WTC11 (cell line): ENCODE measurements at regions of chr22 and their contacts with region 1.

Region 1: DNA sequence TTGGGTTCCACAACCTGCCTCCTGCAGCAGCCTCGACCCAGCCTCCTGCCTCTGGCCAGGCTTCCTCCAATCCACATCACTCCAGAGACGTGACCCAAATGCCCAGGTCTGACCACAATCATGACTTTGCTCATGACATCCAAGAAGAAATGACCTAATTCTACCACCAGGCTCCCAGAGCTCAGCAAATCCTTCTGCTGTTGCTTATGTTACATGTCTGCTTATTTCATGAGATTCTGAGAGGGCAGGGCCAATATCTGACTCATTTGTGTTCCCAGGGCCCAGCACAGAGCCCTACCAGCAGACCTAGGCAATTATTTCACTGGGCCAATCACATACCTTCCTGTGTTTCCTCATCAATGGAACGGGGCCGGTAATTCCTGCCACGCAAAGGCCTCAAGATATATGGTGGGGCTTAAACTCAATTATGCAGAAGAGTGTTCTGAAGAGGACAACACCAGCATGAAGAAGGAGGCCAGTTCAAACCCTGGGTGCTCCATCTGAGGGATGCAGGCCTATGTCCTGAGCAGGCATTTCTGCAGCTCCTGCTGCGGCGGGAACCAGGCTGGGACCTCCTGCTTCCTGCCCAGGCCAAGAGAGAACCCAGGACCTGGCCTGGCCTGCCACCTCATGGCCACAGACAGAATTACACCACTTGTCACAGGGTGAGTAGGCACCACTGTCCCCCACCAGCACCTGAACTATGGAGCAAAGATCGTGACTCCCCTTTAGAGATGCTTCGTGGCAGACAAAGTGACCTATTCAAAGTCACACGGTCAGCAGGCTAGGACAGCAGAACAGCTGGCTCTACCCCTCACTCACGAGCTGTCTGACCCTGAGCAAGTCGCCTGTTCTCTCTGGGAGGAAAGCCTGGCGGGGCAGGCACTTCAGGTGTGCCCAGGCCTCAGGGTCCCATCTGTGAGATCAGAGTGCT is 5.9 kb downstream of the CENPM start:
- DNase-seq: peak; percentile 91
- ATAC-seq: peak; percentile 87
- H3K4me3 Mint-ChIP-seq: no peak overlapping the region
- H3K27ac Mint-ChIP-seq: peak overlapping the region; percentile 0; the same call in 1 of the 2 replicates
- H3K4me1 Mint-ChIP-seq: peaks cover 29% of the 10 kb centered on the region
- H3K27me3 Mint-ChIP-seq: no peaks in the 10 kb centered on the region
- CTCF ChIP-seq: peak; percentile 84

Region 2: GRCh38 chr22:41910050-41911000 is 30.8 kb before region 1 on chr22:
- CTCF ChIA-PET with region 1: interaction called, 12 read pairs
- POLR2A ChIA-PET with region 1: interaction called, 3 read pairs
- DNase-seq: peak; percentile 69
- ATAC-seq: peak; percentile 27
- H3K4me3 Mint-ChIP-seq: no peak overlapping the region
- H3K27ac Mint-ChIP-seq: no peak overlapping the region
- H3K4me1 Mint-ChIP-seq: peaks cover 17% of the 10 kb centered on the region
- H3K27me3 Mint-ChIP-seq: peaks cover 57% of the 10 kb centered on the region
- CTCF ChIP-seq: no peak

Region 3: DNA sequence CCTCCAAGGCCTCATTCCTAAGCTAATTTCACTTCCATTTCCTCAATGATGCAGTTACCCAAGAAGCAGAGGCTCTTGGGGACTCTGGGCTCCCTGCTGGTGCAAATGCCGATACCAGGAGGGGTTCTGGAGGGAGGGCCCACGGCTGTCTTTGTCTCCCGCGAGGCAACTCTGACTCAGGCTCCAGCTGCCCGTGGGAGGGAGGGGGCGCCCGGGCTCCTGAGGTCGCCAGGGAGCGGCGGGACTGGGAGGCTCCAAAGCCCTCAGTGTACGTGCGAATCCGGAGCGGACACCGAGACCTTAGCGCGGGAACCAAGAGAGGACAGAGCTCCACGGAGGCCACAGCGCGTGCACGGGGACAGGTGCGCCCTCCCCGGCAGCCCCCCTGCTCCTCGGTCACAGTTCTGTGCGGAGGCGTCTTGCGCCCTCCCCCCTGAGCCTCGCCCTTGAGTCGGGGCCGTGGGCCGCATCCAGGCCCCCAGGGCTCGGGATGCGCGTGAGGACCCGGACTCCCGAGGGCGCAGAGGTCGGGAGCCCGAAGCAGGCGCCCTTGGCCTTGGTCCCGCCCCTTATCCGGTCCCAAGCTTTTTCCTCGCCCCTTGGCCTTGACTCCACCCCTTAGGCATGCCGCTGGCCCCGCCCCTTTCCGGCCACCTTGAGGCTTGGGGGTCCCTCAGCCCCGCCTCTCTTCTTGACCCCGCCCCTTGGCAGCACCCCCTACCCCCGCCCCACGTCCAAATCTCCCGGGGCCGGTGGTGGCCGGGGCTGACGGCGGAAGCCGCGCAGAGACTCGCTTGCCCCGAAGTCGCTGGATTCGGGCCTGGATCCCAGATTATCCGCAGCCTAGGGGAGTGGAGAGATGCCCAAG is 21.5 kb before region 1 on chr22:
- CTCF ChIA-PET with region 1: interaction called, 143 read pairs
- POLR2A ChIA-PET with region 1: no interaction called
- DNase-seq: peak; percentile 96
- ATAC-seq: peak; percentile 91
- H3K4me3 Mint-ChIP-seq: peak overlapping the region; percentile 70
- H3K27ac Mint-ChIP-seq: no peak overlapping the region
- H3K4me1 Mint-ChIP-seq: peaks cover 26% of the 10 kb centered on the region
- H3K27me3 Mint-ChIP-seq: peaks cover 89% of the 10 kb centered on the region
- CTCF ChIP-seq: no peak

Region 4: DNA sequence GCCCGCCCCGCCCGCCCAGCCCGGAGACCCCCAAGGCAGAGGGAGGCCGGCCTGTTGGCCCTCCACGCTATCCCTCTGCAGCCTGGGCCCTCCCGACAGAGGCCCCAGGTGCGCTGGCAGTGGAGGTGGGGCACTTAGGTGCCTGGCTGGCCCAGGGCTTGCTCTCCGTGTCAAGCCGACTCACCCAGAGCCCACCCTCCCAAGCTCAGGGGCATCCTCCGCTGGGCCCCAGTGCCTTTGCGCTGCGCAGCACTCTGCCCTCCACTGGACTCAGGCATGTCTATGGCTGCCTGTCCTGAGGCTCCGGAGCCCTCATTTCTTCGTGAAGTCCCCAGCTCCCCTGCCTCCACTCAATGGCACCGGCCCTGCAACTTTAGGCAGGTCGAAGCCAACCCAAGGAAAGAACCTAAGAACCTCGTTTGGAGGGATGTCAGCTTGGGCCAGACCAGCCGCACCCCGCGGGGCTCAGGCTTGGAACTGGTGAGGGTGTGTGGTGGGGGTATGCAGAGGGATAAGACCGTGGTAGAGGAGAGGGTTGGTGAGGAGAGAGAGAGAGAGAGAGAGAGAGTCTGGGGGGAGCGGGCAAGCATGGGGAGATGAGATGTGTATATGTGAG is 16.9 kb after region 1 on chr22:
- CTCF ChIA-PET with region 1: interaction called, 14 read pairs
- POLR2A ChIA-PET with region 1: no interaction called
- DNase-seq: no peak
- ATAC-seq: peak; percentile 64
- H3K4me3 Mint-ChIP-seq: peak overlapping the region; percentile 56
- H3K27ac Mint-ChIP-seq: no peak overlapping the region
- H3K4me1 Mint-ChIP-seq: peaks cover 13% of the 10 kb centered on the region
- H3K27me3 Mint-ChIP-seq: peaks cover 40% of the 10 kb centered on the region
- CTCF ChIP-seq: no peak